CD4-positive, alpha-beta T cell (primary cell): ENCODE measurements at regions of chr4 and their contacts with region 1.

Region 1: DNA sequence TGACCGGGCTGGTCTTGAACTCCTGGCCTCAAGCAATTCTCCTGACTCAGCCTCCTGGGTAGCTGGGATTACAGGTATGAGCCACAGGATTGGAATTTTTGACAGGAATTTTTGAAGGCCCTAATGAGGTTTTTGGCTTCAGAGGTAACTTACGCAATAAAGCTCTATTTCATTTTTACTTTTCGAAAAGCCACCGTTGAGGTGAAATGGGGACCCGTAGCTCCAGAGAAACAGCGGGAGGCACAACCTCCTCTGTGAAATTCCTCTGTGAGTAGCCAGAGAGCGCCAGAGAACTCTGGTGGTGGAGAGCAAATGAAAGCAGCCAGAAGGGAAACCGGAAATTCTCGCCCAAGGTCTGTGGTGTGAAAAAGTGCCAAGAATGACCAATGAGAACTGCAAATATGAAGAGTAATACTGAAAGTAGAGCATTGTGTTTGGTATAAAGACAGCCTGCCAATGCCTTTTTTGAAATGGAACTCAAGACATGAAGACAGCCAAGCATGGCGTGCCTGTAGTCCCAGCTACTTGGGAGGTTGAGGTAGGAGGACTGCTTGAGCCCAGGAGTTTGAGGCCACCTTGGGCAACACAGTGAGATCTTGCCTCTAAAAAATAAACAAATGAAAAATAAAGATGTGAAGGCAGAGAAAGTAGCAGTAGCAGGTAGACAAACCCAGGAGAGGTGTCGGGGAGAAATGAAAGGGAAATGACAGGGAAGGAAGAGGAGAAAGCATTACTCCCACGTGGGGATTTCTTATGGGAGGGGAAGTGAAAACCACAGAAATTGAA is 33.0 kb upstream of the TMEM131L start:
- DNase-seq: peak; percentile 40 to 90 (median 52)
- ATAC-seq: peak; percentile 69
- H3K4me3 ChIP-seq: peak overlapping the region; percentile 54
- H3K4me3 Mint-ChIP-seq: peak overlapping the region; percentile 83
- H3K27ac ChIP-seq: peak overlapping the region; percentile 25 to 59
- H3K27ac Mint-ChIP-seq: peak overlapping the region; percentile 91
- H3K4me1 ChIP-seq: peaks cover 42% of the 10 kb centered on the region
- H3K4me1 Mint-ChIP-seq: peaks cover 73% of the 10 kb centered on the region
- H3K27me3 ChIP-seq: no peaks in the 10 kb centered on the region
- H3K27me3 Mint-ChIP-seq: no peaks in the 10 kb centered on the region
- CTCF ChIP-seq: peak; percentile 79

Region 2: GRCh38 chr4:153152501-153153338 is 280.4 kb before region 1 on chr4:
- CTCF ChIA-PET with region 1: no interaction called
- POLR2A ChIA-PET with region 1: no interaction called
- intact Hi-C with region 1: no loop called
- DNase-seq: peak; percentile 43 to 82 (median 64)
- ATAC-seq: peak; percentile 43
- H3K4me3 ChIP-seq: peak overlapping the region; percentile 68
- H3K4me3 Mint-ChIP-seq: peak overlapping the region; percentile 95
- H3K27ac ChIP-seq: peak overlapping the region in 1 of 2 donors; percentile 67
- H3K27ac Mint-ChIP-seq: peak overlapping the region; percentile 92
- H3K4me1 ChIP-seq: peaks cover 30% of the 10 kb centered on the region
- H3K4me1 Mint-ChIP-seq: peaks cover 50% of the 10 kb centered on the region
- H3K27me3 ChIP-seq: no peaks in the 10 kb centered on the region
- H3K27me3 Mint-ChIP-seq: no peaks in the 10 kb centered on the region
- CTCF ChIP-seq: no peak

Region 3: GRCh38 chr4:153344131-153345010 is 88.8 kb before region 1 on chr4 and contains the start of gene MND1:
- CTCF ChIA-PET with region 1: interaction called, 13 read pairs
- POLR2A ChIA-PET with region 1: interaction called, 11 read pairs
- intact Hi-C with region 1: loop called (anchors 2 kb)
- DNase-seq: peak; percentile 85 to 94 (median 90)
- ATAC-seq: peak; percentile 92
- H3K4me3 ChIP-seq: peak within 1 kb of the TSS; percentile 80
- H3K4me3 Mint-ChIP-seq: peak within 1 kb of the TSS; percentile 93
- H3K27ac ChIP-seq: no peak within 1 kb of the TSS
- H3K27ac Mint-ChIP-seq: peak within 1 kb of the TSS; percentile 57
- H3K4me1 ChIP-seq: peaks cover 4% of the 10 kb centered on the region
- H3K4me1 Mint-ChIP-seq: peaks cover 13% of the 10 kb centered on the region
- H3K27me3 ChIP-seq: no peaks in the 10 kb centered on the region
- H3K27me3 Mint-ChIP-seq: peaks cover 7% of the 10 kb centered on the region
- CTCF ChIP-seq: peak; percentile 98
- total RNA-seq, gene MND1: 0.42 TPM in 1 of 2 experiments, not detected in the other

Region 4: GRCh38 chr4:153488006-153488891 is 55.1 kb after region 1 on chr4:
- CTCF ChIA-PET with region 1: interaction called, 5 read pairs
- POLR2A ChIA-PET with region 1: interaction called, 4 read pairs
- intact Hi-C with region 1: loop called in 1 of 2 experiments (anchors 2 kb)
- DNase-seq: peak in 13 of 14 experiments; percentile 50 to 94 (median 67)
- ATAC-seq: peak; percentile 65
- H3K4me3 ChIP-seq: peak overlapping the region; percentile 57
- H3K4me3 Mint-ChIP-seq: peak overlapping the region; percentile 88
- H3K27ac ChIP-seq: peak overlapping the region; percentile 92 to 94
- H3K27ac Mint-ChIP-seq: peak overlapping the region; percentile 92
- H3K4me1 ChIP-seq: peaks cover 68% of the 10 kb centered on the region
- H3K4me1 Mint-ChIP-seq: peaks cover 82% of the 10 kb centered on the region
- H3K27me3 ChIP-seq: no peaks in the 10 kb centered on the region
- H3K27me3 Mint-ChIP-seq: no peaks in the 10 kb centered on the region
- CTCF ChIP-seq: no peak

Region 5: DNA sequence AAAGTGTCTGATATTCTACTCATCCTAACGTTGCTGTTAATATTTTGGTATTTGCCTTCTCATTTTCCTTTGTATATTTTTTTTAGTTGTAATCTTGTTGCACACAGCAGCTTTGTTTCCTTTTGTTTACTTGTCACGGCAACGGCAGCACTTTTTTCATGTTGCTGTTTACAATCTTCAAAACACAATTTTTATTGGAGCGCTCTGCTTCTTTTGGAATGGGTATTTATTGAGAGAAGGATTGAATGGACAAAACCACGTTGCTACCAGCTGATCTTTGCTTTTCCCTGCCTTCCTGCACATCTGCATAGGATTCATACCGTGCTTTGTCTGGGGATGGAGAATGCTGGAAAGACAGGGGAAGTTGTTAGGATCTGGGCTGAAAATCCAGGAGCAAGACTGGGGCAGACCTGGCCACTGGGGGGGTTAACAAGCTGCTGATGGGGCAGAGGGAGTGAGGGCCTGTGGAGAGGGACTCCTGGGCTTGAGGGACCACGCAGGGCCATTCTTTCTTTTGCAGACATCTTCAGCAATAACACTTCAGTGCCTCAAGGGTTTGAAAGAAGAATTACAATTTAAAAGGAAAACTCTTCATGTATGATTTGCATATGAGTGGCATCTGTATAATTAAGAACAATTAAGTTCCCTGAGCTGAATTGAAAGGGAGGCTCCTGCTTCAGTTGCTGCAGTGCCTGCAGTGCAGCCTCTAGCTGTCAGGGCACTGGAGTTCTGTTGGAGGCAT is 102.8 kb after region 1 on chr4:
- CTCF ChIA-PET with region 1: interaction called, 12 read pairs
- POLR2A ChIA-PET with region 1: interaction called, 3 read pairs
- intact Hi-C with region 1: no loop called
- DNase-seq: peak in 3 of 14 experiments; percentile 33 to 51 (median 45)
- ATAC-seq: peak; percentile 62
- H3K4me3 ChIP-seq: no peak overlapping the region
- H3K4me3 Mint-ChIP-seq: peak overlapping the region; percentile 82
- H3K27ac ChIP-seq: peak overlapping the region; percentile 52 to 64
- H3K27ac Mint-ChIP-seq: peak overlapping the region; percentile 91
- H3K4me1 ChIP-seq: peaks cover 68% of the 10 kb centered on the region
- H3K4me1 Mint-ChIP-seq: peaks cover 94% of the 10 kb centered on the region
- H3K27me3 ChIP-seq: no peaks in the 10 kb centered on the region
- H3K27me3 Mint-ChIP-seq: no peaks in the 10 kb centered on the region
- CTCF ChIP-seq: no peak

Region 6: DNA sequence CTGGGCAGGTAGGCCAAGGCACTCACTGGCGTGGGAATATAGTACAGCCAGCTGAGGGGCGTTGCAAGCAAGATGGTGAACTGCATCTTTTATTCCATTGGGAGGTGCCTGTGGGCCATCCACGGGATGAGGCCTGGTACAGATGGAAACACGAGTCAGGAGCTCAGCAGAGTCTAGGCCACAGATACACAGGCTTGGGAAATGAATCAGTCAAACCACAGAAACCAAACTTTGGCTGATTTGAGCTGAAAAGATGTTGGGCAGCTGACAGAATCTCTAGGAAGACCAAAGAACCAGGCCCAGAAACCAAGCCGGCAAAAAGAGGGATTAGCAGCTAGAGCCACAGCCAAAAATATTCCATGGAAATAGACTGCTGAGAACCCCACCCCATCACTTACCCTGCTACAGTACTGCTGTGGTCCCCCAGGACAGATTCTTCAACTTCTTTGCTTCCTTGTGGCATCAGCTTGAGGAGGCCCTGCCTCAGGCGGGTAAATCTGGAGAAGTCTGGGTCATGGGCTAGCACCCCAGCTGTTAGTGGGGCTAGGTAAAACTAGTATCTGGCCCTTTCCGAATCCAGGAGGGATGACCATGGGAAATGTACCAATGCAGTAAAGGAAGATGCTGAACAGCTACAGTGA is 108.4 kb after region 1 on chr4:
- CTCF ChIA-PET with region 1: interaction called, 12 read pairs
- POLR2A ChIA-PET with region 1: no interaction called
- intact Hi-C with region 1: no loop called
- DNase-seq: peak in 2 of 14 experiments; percentile 31
- ATAC-seq: peak; percentile 37
- H3K4me3 ChIP-seq: no peak overlapping the region
- H3K4me3 Mint-ChIP-seq: no peak overlapping the region
- H3K27ac ChIP-seq: no peak overlapping the region
- H3K27ac Mint-ChIP-seq: peak overlapping the region; percentile 61
- H3K4me1 ChIP-seq: peaks cover 63% of the 10 kb centered on the region
- H3K4me1 Mint-ChIP-seq: peaks cover 92% of the 10 kb centered on the region
- H3K27me3 ChIP-seq: no peaks in the 10 kb centered on the region
- H3K27me3 Mint-ChIP-seq: no peaks in the 10 kb centered on the region
- CTCF ChIP-seq: no peak

Region 7: DNA sequence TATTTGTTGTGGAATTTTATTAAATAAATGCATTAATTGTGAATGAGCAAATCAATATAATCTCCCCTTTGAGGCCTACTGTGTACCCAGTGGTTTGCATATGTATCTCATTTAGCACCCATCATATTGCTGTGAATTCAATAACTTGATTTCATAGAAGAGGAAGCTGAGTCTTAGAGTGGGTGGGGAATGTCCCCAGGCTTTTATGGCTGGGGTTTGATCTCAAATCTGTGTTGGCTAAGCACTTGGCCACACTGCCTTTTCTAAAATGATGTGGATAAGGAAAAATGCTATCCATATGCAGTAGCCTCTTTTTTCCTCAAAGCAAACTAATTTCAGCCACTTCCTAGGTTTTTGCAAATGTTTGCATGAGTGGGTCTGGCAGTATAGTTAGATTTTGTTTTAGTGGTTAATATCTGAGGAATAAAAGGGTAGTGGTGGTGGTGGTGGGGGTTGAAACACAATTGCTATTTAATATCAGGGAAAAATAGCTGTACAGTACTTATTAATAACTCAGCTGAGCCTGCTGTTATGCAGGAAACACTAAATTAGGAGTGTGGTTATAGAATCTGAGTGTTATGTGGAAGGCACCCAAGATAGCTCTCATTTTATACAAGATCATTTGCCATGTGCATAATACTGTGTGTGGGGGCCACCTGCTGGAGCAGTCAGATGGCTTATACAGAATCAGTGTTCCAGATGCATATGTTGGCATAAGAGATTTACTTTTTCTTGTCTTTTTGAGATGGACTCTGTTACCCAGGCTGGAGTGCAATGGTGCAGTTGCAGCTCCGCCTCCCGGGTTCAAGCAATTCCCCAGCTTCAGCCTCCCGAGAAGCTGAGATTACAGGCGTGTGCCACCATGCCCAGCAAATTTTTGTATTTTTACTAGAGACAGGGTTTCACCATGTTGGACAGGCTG is 141.0 kb after region 1 on chr4:
- CTCF ChIA-PET with region 1: interaction called, 28 read pairs
- POLR2A ChIA-PET with region 1: interaction called, 30 read pairs
- intact Hi-C with region 1: loop called (anchors 1 kb)
- DNase-seq: peak; percentile 47 to 83 (median 65)
- ATAC-seq: peak; percentile 97
- H3K4me3 ChIP-seq: no peak overlapping the region
- H3K4me3 Mint-ChIP-seq: peak overlapping the region; percentile 25
- H3K27ac ChIP-seq: peak overlapping the region; percentile 1 to 32
- H3K27ac Mint-ChIP-seq: peak overlapping the region; percentile 57
- H3K4me1 ChIP-seq: peaks cover 37% of the 10 kb centered on the region
- H3K4me1 Mint-ChIP-seq: peaks cover 85% of the 10 kb centered on the region
- H3K27me3 ChIP-seq: no peaks in the 10 kb centered on the region
- H3K27me3 Mint-ChIP-seq: no peaks in the 10 kb centered on the region
- CTCF ChIP-seq: peak; percentile 78

Region 8: DNA sequence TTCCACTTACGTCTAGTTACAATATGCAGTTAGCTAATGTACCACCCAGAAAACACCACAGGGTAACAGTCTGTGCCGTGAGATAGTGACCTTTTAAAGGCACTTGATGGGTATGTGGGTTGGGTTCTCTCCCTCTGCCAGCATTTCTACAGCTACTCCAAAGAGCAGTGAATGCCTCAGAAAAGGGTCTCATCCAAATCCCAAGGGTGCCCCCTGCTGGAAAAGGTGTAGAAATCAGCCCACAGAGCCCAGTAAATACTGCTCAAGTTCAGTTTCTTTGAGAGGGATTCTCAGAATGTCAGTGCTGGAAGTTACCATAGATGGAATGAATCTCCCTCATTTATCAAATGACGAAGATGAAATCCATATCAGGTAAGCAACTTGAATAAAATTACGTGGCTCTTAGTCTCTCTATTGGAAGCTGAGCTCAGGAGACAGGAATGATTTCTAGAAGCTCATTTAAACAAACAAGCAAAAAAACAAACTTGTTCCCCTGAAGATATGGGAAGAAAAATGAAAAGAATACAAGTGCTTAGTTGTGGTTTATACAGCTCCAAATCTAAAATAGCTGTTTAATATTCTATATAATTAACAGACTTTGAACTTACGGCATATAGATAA is 317.1 kb after region 1 on chr4:
- CTCF ChIA-PET with region 1: no interaction called
- POLR2A ChIA-PET with region 1: no interaction called
- intact Hi-C with region 1: loop called in 1 of 2 experiments (anchors 10 kb)
- DNase-seq: peak; percentile 26 to 78 (median 50)
- ATAC-seq: peak; percentile 80
- H3K4me3 ChIP-seq: no peak overlapping the region
- H3K4me3 Mint-ChIP-seq: no peak overlapping the region
- H3K27ac ChIP-seq: no peak overlapping the region
- H3K27ac Mint-ChIP-seq: no peak overlapping the region
- H3K4me1 ChIP-seq: peaks cover 6% of the 10 kb centered on the region
- H3K4me1 Mint-ChIP-seq: peaks cover 13% of the 10 kb centered on the region
- H3K27me3 ChIP-seq: peaks cover 0 to 4% of the 10 kb centered on the region in 2 experiments
- H3K27me3 Mint-ChIP-seq: peaks cover 4% of the 10 kb centered on the region
- CTCF ChIP-seq: peak; percentile 83